ENCODE measurements at regions of chr18 and their contacts with region 1.

Region 1: DNA sequence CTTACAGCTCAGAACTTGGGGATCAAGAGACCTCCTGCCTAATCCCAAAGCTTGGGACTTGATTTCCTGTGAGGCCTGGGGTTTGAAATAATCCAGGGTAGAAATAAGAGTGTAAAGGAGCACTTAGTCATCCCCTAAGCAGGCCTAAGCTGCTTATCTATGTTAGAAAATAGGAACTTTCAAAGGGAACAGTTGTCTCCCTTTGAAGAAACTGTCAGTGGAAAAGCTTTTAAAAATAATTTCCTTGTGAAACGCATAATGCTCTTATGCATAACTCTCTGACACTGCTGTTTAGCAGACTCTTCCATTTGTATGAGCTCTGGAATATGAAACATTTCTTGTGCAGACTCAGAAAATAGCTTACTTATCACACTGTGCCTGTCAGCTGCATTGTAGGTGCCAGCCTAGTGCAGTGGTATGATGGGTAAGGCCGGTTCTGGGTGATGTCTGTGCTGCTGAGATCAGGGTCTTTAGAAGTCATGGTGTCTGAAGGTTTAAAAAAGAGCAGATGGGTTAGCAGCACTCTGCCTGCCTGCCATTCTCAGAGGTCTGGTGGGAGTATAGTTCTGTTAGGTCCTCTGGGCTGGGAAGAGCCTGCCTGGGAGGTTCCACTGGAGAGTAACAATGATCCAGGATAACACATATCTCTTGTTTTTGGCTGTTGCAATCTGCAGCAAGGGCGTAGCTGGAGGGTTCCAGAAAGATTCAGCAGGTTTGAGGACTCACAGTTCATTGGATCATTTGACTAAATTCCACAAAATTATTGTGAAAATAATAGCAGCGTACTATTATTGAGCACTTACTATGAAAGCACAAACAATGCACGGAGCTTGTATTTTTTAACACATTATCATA is 283.2 kb upstream of the MEX3C start:
- DNase-seq: no peak
- ATAC-seq: no peak
- H3K4me3 ChIP-seq: no peak overlapping the region
- H3K27ac ChIP-seq: no peak overlapping the region
- H3K4me1 ChIP-seq: no peaks in the 10 kb centered on the region
- H3K27me3 ChIP-seq: no peaks in the 10 kb centered on the region

Region 2: DNA sequence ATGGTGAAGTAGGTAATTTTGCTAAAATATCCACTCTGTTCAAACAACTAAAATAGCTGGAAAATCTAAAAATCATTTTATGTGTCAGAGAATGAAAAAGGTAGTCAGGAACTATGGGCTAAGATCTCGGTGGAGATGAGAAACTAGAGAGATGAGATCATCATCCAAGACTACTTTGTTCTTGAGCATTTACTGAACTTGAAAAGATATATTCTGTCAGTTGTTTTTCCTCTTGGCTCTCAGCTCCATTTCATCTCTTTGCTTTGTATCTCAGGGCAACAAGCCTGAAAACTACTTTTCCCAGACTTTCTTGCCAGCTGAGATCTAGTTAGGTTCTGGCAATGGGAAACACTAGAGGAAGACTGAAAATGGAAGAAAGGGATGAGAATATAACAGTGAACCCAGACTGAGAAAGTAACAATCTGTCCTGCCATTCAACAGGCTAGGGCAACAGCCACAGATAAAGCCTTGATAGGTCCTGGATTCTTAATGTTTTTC is 63.1 kb after region 1 on chr18:
- intact Hi-C with region 1: loop called in 1 of 2 experiments (anchors 10 kb)
- DNase-seq: no peak
- ATAC-seq: no peak
- H3K4me3 ChIP-seq: no peak overlapping the region
- H3K27ac ChIP-seq: no peak overlapping the region
- H3K4me1 ChIP-seq: no peaks in the 10 kb centered on the region
- H3K27me3 ChIP-seq: no peaks in the 10 kb centered on the region

Measured in aorta (tissue), 5 donors.